ENCODE measurements at regions of chrX and their contacts with region 1.

Region 1: DNA sequence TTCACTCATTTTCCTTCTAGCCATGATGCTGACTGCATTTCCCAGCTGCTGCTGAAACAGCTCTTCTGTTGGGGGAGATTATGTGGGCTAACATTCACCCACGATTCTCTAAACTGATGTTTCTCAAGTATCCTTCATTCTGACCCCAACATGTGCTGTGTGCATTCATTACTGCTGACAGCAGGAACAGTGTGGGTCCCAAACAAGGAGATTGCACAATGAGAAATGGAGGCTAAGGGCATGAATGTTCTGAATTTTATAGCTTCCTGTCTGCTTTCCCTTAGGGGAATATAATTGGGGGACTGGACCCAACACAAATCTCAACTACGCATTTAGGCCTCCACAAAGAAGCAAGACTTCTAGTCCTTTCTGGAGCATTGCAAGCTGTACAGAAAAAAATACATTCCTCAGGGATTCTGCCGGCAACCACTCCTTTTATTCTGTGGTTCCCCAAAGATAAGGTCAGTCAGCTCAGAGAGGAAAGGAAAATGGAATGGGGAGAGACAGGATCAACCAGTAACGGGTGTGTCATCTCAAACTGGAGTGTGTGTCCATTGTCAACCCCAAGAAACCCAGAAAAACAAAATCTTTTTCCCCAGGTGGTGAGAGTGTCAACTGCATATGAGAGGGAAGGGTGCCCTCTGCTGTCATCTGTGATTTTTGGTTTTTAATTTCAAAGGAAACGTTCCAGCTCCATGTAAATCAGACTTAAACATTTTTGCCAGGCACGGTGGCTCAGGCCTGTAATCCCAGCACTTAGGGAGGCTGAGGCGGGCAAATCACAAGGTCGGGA is 81.5 kb upstream of the EGFL6 start:
- DNase-seq: no peak
- ATAC-seq: peak; percentile 83

Region 2: DNA sequence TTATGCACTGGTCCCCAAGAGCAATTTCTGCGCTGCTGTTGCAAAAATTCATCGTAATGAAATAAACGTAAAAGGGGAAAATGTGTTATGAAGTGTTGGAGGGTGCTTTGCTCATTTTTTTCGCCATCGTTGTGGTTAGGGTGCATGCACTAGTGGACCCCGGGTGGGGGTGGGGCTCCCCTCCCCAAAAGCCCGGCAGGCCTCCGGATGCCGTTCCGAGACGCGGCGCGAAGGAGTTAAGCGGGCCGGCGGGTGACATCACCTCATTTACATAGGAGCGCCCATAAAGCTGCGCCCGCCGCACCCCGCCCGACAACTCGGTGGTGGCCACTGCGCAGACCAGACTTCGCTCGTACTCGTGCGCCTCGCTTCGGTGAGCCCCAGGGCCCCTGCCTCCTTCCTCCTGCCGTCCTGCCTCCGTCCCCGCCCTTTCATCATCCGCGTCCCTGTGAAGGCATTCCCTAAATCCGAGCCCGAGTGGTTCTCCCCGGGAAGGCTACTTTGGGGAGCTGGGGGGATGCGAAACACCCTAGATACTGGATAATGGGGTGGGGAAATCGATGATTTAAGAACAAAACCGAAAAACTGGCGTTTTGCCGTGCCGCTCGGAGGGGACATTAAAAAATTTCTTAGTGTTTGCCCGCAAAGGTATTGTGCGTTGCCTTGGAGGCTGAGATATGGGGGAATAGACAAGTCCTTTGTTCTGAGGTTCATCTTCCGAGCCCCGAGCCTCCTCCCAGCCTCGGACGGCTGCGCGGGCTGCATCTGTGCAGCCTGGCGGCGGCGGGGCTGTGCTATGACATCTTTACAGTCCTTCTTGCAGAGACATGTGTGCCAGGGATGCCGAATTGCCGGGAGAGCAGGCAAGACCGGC is 512.9 kb before region 1 on chrX and contains the start of gene TMSB4X:
- intact Hi-C with region 1: loop called (anchors 5 kb)
- DNase-seq: peak; percentile 90
- ATAC-seq: peak; percentile 84
- total RNA-seq, gene TMSB4X: 875 TPM